Activated T-helper 1 cell treated with anti-CD3 and anti-CD28 coated beads, Interleukin-12 subunit alpha, Interleukin-12 subunit beta, Interleukin-2, Interleukin-4 antibody, amounts not matched to agents 30 ng/mL and 10 ng/mL and 1 ng/mL, durations not matched to agents 14 hours and 24 hours and 36 hours (primary cell): ENCODE measurements at regions of chr4 and their contacts with region 1.

Region 1: GRCh38 chr4:150259861-150260567 is 181.8 kb downstream of the DCLK2 start:
- DNase-seq: no peak
- H3K4me3 Mint-ChIP-seq: no peak overlapping the region
- H3K27ac Mint-ChIP-seq: no peak overlapping the region
- H3K4me1 Mint-ChIP-seq: no peaks in the 10 kb centered on the region
- H3K27me3 Mint-ChIP-seq: no peaks in the 10 kb centered on the region

Region 2: GRCh38 chr4:151766700-151767099 is 1506.7 kb after region 1 on chr4:
- intact Hi-C with region 1: loop called (anchors 5 kb)
- DNase-seq: no peak
- H3K4me3 Mint-ChIP-seq: no peak overlapping the region
- H3K27ac Mint-ChIP-seq: no peak overlapping the region
- H3K4me1 Mint-ChIP-seq: peaks cover 2% of the 10 kb centered on the region
- H3K27me3 Mint-ChIP-seq: peaks cover 12% of the 10 kb centered on the region